GM10248 (cell line): ENCODE measurements at regions of chr2 and their contacts with region 1.

Region 1: GRCh38 chr2:231133365-231134099 is 8.7 kb upstream of the HTR2B start:
- DNase-seq: no peak
- CTCF ChIP-seq: no peak

Region 2: GRCh38 chr2:231152800-231153557 is 19.4 kb after region 1 on chr2:
- CTCF ChIA-PET with region 1: interaction called, 10 read pairs
- POLR2A ChIA-PET with region 1: no interaction called
- DNase-seq: no peak
- CTCF ChIP-seq: no peak